CD4-positive, alpha-beta T cell (primary cell): ENCODE measurements at regions of chr3 and their contacts with region 1.

Region 1: DNA sequence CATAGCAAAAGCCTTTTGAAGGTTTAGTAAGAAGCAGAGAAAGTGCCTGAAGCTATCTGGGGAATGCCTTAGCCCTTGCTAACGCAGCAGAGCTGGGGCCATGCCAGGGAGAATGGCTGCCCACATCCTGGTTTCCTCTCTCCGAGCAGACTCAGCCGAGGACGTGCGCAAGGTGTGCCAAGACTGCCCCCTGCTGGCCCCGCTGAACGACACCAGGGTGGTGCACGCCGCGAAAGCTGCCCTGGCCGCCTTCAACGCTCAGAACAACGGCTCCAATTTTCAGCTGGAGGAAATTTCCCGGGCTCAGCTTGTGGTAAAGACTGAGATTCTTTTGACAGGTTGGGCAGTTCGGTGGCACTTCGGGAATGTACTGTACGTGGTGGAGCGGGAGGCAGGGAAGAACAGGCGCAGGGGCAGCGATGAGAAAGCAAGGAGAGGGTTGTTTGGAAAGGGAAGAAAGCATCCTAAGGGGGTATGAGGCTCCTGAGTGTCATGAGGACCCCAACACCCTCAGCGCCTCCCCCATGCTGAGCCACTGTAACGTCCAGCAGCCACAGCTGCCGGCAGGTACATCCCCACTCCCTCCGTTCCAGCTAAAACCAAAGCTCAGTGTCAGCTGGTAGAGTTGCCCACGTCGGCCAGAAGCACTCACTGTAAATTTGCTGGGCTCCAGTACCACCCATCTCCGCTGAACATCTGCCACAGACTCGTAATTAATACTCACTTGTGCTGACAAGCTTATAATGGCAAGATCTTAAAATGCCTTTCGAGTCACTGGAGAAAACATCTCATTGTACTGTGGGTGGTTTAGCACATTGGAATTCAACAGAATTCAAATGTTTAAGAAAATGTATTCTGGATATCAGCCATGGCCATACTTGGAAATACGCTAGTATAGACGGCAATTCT is 4.4 kb downstream of the AHSG start:
- DNase-seq: peak; percentile 72 to 95 (median 84)
- ATAC-seq: peak; percentile 97
- H3K4me3 ChIP-seq: peak overlapping the region; percentile 19
- H3K4me3 Mint-ChIP-seq: peak overlapping the region; percentile 46
- H3K27ac ChIP-seq: no peak overlapping the region
- H3K27ac Mint-ChIP-seq: peak overlapping the region; percentile 30
- H3K4me1 ChIP-seq: peaks cover 19% of the 10 kb centered on the region
- H3K4me1 Mint-ChIP-seq: peaks cover 19% of the 10 kb centered on the region
- H3K27me3 ChIP-seq: peaks cover 0 to 9% of the 10 kb centered on the region in 2 experiments
- H3K27me3 Mint-ChIP-seq: peaks cover 30% of the 10 kb centered on the region
- CTCF ChIP-seq: peak; percentile 94

Region 2: DNA sequence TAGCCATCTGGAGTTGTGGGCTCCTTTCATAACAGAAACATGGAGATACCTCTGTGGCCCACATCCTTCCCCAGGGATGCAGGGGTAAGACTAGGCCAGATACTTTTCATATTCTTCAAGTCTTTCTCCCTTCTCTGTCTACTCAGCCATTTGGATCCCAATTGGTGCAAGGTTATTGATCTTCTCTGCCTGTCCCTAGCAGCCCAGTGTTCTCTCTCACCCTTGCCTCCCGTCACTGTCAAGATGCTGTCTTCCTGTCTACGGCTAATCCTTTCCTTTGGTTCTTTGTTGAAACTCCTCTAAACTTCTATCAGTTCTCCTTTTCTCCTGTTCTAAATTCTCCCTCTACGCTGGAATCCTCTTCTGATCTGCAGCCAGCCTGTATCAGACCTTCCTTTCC is 979.9 kb before region 1 on chr3:
- CTCF ChIA-PET with region 1: no interaction called
- POLR2A ChIA-PET with region 1: no interaction called
- intact Hi-C with region 1: no loop called
- DNase-seq: no peak
- ATAC-seq: no peak
- H3K4me3 ChIP-seq: no peak overlapping the region
- H3K4me3 Mint-ChIP-seq: no peak overlapping the region
- H3K27ac ChIP-seq: no peak overlapping the region
- H3K27ac Mint-ChIP-seq: no peak overlapping the region
- H3K4me1 ChIP-seq: peaks cover 3% of the 10 kb centered on the region
- H3K4me1 Mint-ChIP-seq: peaks cover 7% of the 10 kb centered on the region
- H3K27me3 ChIP-seq: no peaks in the 10 kb centered on the region
- H3K27me3 Mint-ChIP-seq: peaks cover 6% of the 10 kb centered on the region
- CTCF ChIP-seq: no peak

Region 3: GRCh38 chr3:185983495-185984141 is 633.7 kb before region 1 on chr3:
- CTCF ChIA-PET with region 1: interaction called, 16 read pairs
- POLR2A ChIA-PET with region 1: interaction called, 3 read pairs
- intact Hi-C with region 1: loop called (anchors 2 kb)
- DNase-seq: peak; percentile 27 to 79 (median 42)
- ATAC-seq: peak; percentile 68
- H3K4me3 ChIP-seq: no peak overlapping the region
- H3K4me3 Mint-ChIP-seq: no peak overlapping the region
- H3K27ac ChIP-seq: no peak overlapping the region
- H3K27ac Mint-ChIP-seq: no peak overlapping the region
- H3K4me1 ChIP-seq: peaks cover 8% of the 10 kb centered on the region
- H3K4me1 Mint-ChIP-seq: no peaks in the 10 kb centered on the region
- H3K27me3 ChIP-seq: no peaks in the 10 kb centered on the region
- H3K27me3 Mint-ChIP-seq: peaks cover 5% of the 10 kb centered on the region
- CTCF ChIP-seq: peak; percentile 94

Region 4: GRCh38 chr3:186442162-186442561 is 175.1 kb before region 1 on chr3:
- CTCF ChIA-PET with region 1: no interaction called
- POLR2A ChIA-PET with region 1: no interaction called
- intact Hi-C with region 1: no loop called
- DNase-seq: no peak
- ATAC-seq: no peak
- H3K4me3 ChIP-seq: no peak overlapping the region
- H3K4me3 Mint-ChIP-seq: no peak overlapping the region
- H3K27ac ChIP-seq: no peak overlapping the region
- H3K27ac Mint-ChIP-seq: no peak overlapping the region
- H3K4me1 ChIP-seq: no peaks in the 10 kb centered on the region
- H3K4me1 Mint-ChIP-seq: no peaks in the 10 kb centered on the region
- H3K27me3 ChIP-seq: no peaks in the 10 kb centered on the region
- H3K27me3 Mint-ChIP-seq: no peaks in the 10 kb centered on the region
- CTCF ChIP-seq: no peak

Region 5: GRCh38 chr3:186510374-186511079 is 106.8 kb before region 1 on chr3:
- CTCF ChIA-PET with region 1: no interaction called
- POLR2A ChIA-PET with region 1: no interaction called
- intact Hi-C with region 1: no loop called
- DNase-seq: no peak
- ATAC-seq: no peak
- H3K4me3 ChIP-seq: no peak overlapping the region
- H3K4me3 Mint-ChIP-seq: no peak overlapping the region
- H3K27ac ChIP-seq: no peak overlapping the region
- H3K27ac Mint-ChIP-seq: no peak overlapping the region
- H3K4me1 ChIP-seq: peaks cover 14% of the 10 kb centered on the region
- H3K4me1 Mint-ChIP-seq: peaks cover 26% of the 10 kb centered on the region
- H3K27me3 ChIP-seq: no peaks in the 10 kb centered on the region
- H3K27me3 Mint-ChIP-seq: no peaks in the 10 kb centered on the region
- CTCF ChIP-seq: no peak

Region 6: GRCh38 chr3:186540221-186540834 is 77.0 kb before region 1 on chr3:
- CTCF ChIA-PET with region 1: interaction called, 21 read pairs
- POLR2A ChIA-PET with region 1: interaction called, 4 read pairs
- intact Hi-C with region 1: loop called in 1 of 2 experiments (anchors 5 kb)
- DNase-seq: peak; percentile 66 to 92 (median 80)
- ATAC-seq: peak; percentile 98
- H3K4me3 ChIP-seq: no peak overlapping the region
- H3K4me3 Mint-ChIP-seq: no peak overlapping the region
- H3K27ac ChIP-seq: no peak overlapping the region
- H3K27ac Mint-ChIP-seq: no peak overlapping the region
- H3K4me1 ChIP-seq: peaks cover 4% of the 10 kb centered on the region
- H3K4me1 Mint-ChIP-seq: peaks cover 7% of the 10 kb centered on the region
- H3K27me3 ChIP-seq: no peaks in the 10 kb centered on the region
- H3K27me3 Mint-ChIP-seq: no peaks in the 10 kb centered on the region
- CTCF ChIP-seq: peak; percentile 84

Region 7: GRCh38 chr3:186583831-186584230 is 33.5 kb before region 1 on chr3:
- CTCF ChIA-PET with region 1: interaction called, 12 read pairs
- POLR2A ChIA-PET with region 1: no interaction called
- intact Hi-C with region 1: no loop called
- DNase-seq: no peak
- ATAC-seq: no peak
- H3K4me3 ChIP-seq: no peak overlapping the region
- H3K4me3 Mint-ChIP-seq: no peak overlapping the region
- H3K27ac ChIP-seq: no peak overlapping the region
- H3K27ac Mint-ChIP-seq: no peak overlapping the region
- H3K4me1 ChIP-seq: no peaks in the 10 kb centered on the region
- H3K4me1 Mint-ChIP-seq: no peaks in the 10 kb centered on the region
- H3K27me3 ChIP-seq: no peaks in the 10 kb centered on the region
- H3K27me3 Mint-ChIP-seq: no peaks in the 10 kb centered on the region
- CTCF ChIP-seq: no peak

Region 8: GRCh38 chr3:186826976-186827731 is 209.9 kb after region 1 on chr3:
- CTCF ChIA-PET with region 1: interaction called, 49 read pairs
- POLR2A ChIA-PET with region 1: interaction called, 3 read pairs
- intact Hi-C with region 1: loop called in 1 of 2 experiments (anchors 1 kb)
- DNase-seq: peak; percentile 68 to 96 (median 82)
- ATAC-seq: peak; percentile 92
- H3K4me3 ChIP-seq: peak overlapping the region; percentile 60
- H3K4me3 Mint-ChIP-seq: peak overlapping the region; percentile 76
- H3K27ac ChIP-seq: no peak overlapping the region
- H3K27ac Mint-ChIP-seq: no peak overlapping the region
- H3K4me1 ChIP-seq: peaks cover 27% of the 10 kb centered on the region
- H3K4me1 Mint-ChIP-seq: peaks cover 23% of the 10 kb centered on the region
- H3K27me3 ChIP-seq: peaks cover 37 to 65% of the 10 kb centered on the region in 2 experiments
- H3K27me3 Mint-ChIP-seq: peaks cover 65% of the 10 kb centered on the region
- CTCF ChIP-seq: no peak